Activated naive CD4-positive, alpha-beta T cell treated with anti-CD3 and anti-CD28 coated beads for 36 hours (primary cell): ENCODE measurements at regions of chr1 and their contacts with region 1.

Region 1: DNA sequence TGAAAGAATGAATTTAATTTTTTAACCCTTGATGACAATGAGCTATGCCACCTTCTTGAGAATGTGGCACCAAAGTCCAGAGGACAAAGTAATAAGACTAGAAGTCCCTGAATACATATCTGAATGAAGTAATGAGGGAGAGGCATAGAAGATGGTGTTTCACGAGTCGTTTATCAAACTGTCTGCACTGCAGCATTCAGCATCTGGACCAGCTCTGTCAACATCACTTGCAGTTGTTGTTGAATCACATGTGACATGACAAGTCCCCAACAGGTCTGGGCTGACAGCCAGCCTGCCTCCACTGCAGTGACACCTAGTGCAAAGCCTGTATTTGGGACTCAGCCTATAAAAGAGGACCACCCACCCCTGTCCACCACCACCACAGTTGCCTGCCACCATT is 17.3 kb upstream of the GALNT2 start:
- DNase-seq: no peak
- H3K4me3 Mint-ChIP-seq: no peak overlapping the region
- H3K27ac Mint-ChIP-seq: no peak overlapping the region
- H3K4me1 Mint-ChIP-seq: peaks cover 3% of the 10 kb centered on the region
- H3K27me3 Mint-ChIP-seq: no peaks in the 10 kb centered on the region

Region 2: GRCh38 chr1:229856009-229856650 is 193.6 kb before region 1 on chr1:
- CTCF ChIA-PET with region 1: no interaction called
- intact Hi-C with region 1: loop called (anchors 10 kb)
- DNase-seq: peak; percentile 28
- H3K4me3 Mint-ChIP-seq: peak overlapping the region; percentile 52
- H3K27ac Mint-ChIP-seq: no peak overlapping the region
- H3K4me1 Mint-ChIP-seq: peaks cover 9% of the 10 kb centered on the region
- H3K27me3 Mint-ChIP-seq: no peaks in the 10 kb centered on the region